Activated naive CD4-positive, alpha-beta T cell treated with anti-CD3 and anti-CD28 coated beads, Interleukin-2, amount 10 ng/mL, durations not matched to agents 7 days and 5 days (primary cell): ENCODE measurements at regions of chr11 and their contacts with region 1.

Region 1: GRCh38 chr11:62542750-62543567 is 3.6 kb downstream of the AHNAK start:
- DNase-seq: peak; percentile 80
- H3K4me3 Mint-ChIP-seq: peak overlapping the region; percentile 61
- H3K27ac Mint-ChIP-seq: peak overlapping the region; percentile 64
- H3K4me1 Mint-ChIP-seq: peaks cover 79% of the 10 kb centered on the region
- H3K27me3 Mint-ChIP-seq: peaks cover 30% of the 10 kb centered on the region

Region 2: DNA sequence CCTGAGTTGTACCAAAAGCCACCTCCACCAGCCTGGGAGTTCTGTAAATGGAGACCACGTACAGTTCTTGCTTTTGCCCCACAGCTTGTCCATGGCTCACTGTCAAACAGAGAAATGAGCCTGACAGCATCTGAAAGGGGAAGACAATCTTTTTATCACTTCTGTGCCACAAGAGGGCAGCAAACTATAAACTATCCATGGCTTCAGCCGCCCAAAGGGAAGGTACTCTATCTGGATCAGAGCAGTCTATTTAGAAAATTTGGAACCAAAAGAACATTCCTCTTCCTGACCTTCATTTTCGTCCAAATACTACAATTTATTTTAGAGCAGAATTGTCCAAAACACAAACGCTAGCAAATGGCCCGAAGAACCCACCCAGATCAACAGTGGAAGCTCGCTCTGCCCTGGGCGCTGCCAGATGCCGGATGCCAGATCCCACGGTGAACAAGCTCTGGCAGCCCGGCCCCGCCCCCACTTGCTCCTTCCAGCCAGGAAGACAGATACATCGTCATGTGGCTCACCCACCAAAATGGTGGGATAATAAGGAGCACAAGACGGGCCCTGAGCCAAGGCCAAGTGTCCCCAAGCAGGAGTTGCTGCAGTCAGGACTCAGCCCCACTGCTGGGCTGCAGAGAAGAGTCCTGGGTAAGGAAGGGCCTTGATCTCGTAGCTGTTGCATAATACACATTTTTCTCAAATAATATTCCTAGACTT is 148.0 kb before region 1 on chr11:
- CTCF ChIA-PET with region 1: interaction called, 54 read pairs
- DNase-seq: peak; percentile 65
- H3K4me3 Mint-ChIP-seq: no peak overlapping the region
- H3K27ac Mint-ChIP-seq: no peak overlapping the region
- H3K4me1 Mint-ChIP-seq: peaks cover 41% of the 10 kb centered on the region
- H3K27me3 Mint-ChIP-seq: no peaks in the 10 kb centered on the region

Region 3: DNA sequence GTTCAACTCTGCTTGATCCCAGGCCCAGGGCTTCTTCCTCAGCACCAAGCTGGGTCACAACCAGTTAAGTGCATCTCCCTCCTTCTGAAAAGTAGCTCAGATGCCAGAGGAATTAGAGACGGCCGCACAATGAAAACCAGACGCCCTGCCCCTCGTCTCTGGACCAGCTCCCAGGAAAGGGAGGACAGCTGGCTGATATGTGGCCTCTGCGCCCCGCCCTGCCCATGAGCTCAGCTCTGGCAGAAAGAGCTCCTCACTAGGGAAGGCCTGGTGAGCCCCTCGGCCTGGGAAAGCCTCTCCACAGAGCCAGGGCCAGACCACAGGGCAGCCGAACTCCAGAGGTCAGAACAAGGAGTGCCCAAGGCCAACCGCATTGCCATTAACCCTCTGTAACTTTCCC is 142.2 kb before region 1 on chr11:
- CTCF ChIA-PET with region 1: interaction called, 54 read pairs
- DNase-seq: no peak
- H3K4me3 Mint-ChIP-seq: no peak overlapping the region
- H3K27ac Mint-ChIP-seq: no peak overlapping the region
- H3K4me1 Mint-ChIP-seq: peaks cover 56% of the 10 kb centered on the region
- H3K27me3 Mint-ChIP-seq: peaks cover 8% of the 10 kb centered on the region

Region 4: GRCh38 chr11:62419314-62419929 is 123.5 kb before region 1 on chr11:
- CTCF ChIA-PET with region 1: interaction called, 161 read pairs
- DNase-seq: no peak
- H3K4me3 Mint-ChIP-seq: no peak overlapping the region
- H3K27ac Mint-ChIP-seq: no peak overlapping the region
- H3K4me1 Mint-ChIP-seq: peaks cover 3% of the 10 kb centered on the region
- H3K27me3 Mint-ChIP-seq: peaks cover 55% of the 10 kb centered on the region

Region 5: GRCh38 chr11:62556108-62556871 is 13.3 kb after region 1 on chr11:
- CTCF ChIA-PET with region 1: interaction called, 276 read pairs
- DNase-seq: peak; percentile 93
- H3K4me3 Mint-ChIP-seq: peak overlapping the region; percentile 59
- H3K27ac Mint-ChIP-seq: peak overlapping the region; percentile 97
- H3K4me1 Mint-ChIP-seq: peaks cover 95% of the 10 kb centered on the region
- H3K27me3 Mint-ChIP-seq: no peaks in the 10 kb centered on the region

Region 6: GRCh38 chr11:62567018-62567633 is 24.2 kb after region 1 on chr11:
- CTCF ChIA-PET with region 1: interaction called, 276 read pairs
- DNase-seq: no peak
- H3K4me3 Mint-ChIP-seq: no peak overlapping the region
- H3K27ac Mint-ChIP-seq: no peak overlapping the region
- H3K4me1 Mint-ChIP-seq: peaks cover 48% of the 10 kb centered on the region
- H3K27me3 Mint-ChIP-seq: no peaks in the 10 kb centered on the region

Region 7: DNA sequence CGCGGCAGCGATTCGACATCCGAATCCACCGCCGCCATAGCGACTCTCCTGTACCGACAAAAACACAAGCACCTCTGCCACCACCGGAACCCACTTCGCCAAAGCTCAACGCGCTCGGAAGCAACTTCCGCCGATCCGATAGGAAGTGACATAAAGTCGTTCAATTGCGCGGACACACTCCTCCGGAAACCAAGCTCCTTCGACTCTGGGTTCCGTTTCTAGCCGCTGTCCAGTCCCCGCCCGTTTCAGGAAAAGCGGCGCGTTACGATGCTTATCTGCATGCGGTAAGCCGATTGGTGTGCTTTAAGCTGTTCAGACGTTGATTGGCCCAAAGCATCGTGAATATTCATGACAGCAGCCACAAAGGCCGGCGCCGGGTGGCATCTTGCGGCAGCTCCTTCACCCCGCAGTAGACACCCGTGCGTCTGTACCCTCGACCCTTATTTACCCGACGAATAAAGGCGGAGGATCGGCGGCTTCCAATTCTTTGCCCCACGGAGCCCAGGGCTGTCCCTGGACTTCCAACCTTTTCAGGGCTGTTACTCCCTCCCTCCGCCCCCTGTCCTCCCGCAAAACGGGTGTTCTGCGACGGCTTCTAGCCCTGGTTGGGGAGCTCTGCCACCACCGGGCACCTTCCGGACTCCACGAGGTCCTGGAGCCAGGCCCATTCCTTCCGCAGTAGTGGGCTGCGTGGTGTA is 48.6 kb after region 1 on chr11 and contains the start of gene TUT1:
- CTCF ChIA-PET with region 1: interaction called, 10 read pairs
- DNase-seq: peak; percentile 98
- H3K4me3 Mint-ChIP-seq: peak within 1 kb of the TSS; percentile 100
- H3K27ac Mint-ChIP-seq: peak within 1 kb of the TSS; percentile 98
- H3K4me1 Mint-ChIP-seq: peaks cover 56% of the 10 kb centered on the region
- H3K27me3 Mint-ChIP-seq: no peaks in the 10 kb centered on the region

Region 8: DNA sequence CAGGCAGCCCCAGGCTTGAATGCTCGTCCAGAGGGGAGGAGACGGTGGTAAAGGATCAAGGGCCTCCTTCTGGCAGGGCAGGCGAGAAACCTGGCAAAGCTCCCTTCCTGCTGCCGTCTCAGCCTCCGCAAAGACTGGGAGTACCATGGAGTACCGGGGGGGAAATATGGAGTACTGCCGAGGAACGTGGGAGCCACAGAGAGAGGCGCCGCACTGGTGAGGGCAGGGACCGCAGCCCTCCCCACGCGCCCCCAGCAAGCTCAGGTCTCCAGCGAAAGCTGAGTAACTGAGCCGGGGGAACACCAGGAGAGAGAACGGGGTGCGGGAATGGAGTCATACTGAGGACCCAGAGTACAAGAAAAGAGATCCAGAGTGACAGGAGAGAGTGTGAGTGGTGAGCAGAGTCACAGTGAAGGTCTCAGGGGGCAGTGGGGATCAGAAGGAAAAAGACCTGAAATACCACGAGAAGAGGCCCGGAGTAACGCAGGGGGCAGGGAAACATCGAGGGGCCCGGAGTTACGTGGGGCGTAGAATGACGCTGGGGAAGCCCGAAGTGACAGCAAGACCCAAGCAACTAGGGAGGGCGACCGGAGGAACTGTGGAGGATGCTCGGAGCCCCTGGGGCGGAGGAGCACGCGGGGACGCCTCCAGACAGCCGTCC is 68.9 kb after region 1 on chr11:
- CTCF ChIA-PET with region 1: no interaction called
- DNase-seq: peak; percentile 48
- H3K4me3 Mint-ChIP-seq: peak overlapping the region; percentile 91
- H3K27ac Mint-ChIP-seq: peak overlapping the region; percentile 95
- H3K4me1 Mint-ChIP-seq: peaks cover 67% of the 10 kb centered on the region
- H3K27me3 Mint-ChIP-seq: no peaks in the 10 kb centered on the region